Motor neuron (in vitro differentiated cells): ENCODE measurements at regions of chr13 and their contacts with region 1.

Region 1: GRCh38 chr13:87274209-87274819 is 396.9 kb upstream of the SLITRK5 start:
- ATAC-seq: peak; percentile 44 to 88 (median 54)
- H3K4me3 ChIP-seq: no peak overlapping the region
- H3K27ac ChIP-seq: no peak overlapping the region
- H3K4me1 ChIP-seq: no peaks in the 10 kb centered on the region

Region 2: GRCh38 chr13:86882835-86883234 is 391.5 kb before region 1 on chr13:
- in situ Hi-C with region 1: loop called in 1 of 9 experiments (anchors 25 kb)
- ATAC-seq: no peak
- H3K4me3 ChIP-seq: no peak overlapping the region
- H3K27ac ChIP-seq: no peak overlapping the region
- H3K4me1 ChIP-seq: no peaks in the 10 kb centered on the region

Region 3: GRCh38 chr13:87671031-87671752 is 396.9 kb after region 1 on chr13 and contains the start of gene SLITRK5:
- in situ Hi-C with region 1: loop called in 1 of 9 experiments (anchors 25 kb)
- ATAC-seq: peak; percentile 79 to 95 (median 82)
- H3K4me3 ChIP-seq: peak within 1 kb of the TSS; percentile 76 to 99 (median 94)
- H3K27ac ChIP-seq: peak within 1 kb of the TSS; percentile 55 to 91
- H3K4me1 ChIP-seq: peaks cover 0 to 10% of the 10 kb centered on the region in 2 donors
- total RNA-seq, gene SLITRK5: 0.05 to 10.5 (median 4.8) TPM